ENCODE measurements at regions of chr17 and their contacts with region 1.

Region 1: DNA sequence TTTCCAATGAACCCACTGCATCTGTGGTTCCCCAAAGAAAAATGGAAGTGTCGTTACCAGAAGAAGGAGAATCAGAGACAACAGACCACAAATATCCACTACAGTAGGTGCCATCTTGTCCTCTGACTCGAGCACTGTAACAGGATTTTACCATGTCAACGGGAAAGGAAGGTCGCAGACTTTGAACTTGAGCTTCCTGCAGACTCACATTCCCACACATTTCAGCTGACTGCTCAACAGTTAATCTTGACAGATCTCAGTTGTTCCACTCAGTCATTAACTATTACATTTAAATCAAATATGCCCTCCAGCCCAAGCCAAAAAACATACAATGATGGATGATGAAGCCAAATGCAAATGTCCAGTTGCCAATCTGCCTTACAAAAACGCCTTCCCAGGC is 37.0 kb downstream of the GAS7 start:
- DNase-seq: no peak

Region 2: GRCh38 chr17:10144982-10145381 is 16.4 kb before region 1 on chr17:
- intact Hi-C with region 1: loop called in 1 of 2 experiments (anchors 2 kb)
- DNase-seq: no peak

Region 3: DNA sequence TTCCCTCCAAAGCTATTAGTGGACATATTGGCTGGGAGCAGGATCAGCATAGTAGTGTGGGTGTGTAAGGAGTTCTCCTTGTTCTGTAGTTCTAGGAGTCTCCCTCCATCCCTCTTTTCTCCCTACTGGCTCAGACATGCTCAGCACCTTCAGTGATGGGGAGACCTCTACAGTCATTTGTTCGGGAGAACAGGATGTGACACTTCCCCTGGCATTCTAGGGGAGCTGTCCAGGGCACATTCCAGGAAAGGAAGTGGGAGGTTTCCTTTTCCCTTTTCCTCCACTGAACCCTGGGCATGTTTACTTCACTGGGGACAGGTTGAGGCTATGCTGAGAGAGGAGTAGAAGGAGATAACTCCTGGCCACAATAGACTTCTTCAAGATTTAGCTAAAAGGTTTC is 124.9 kb after region 1 on chr17:
- intact Hi-C with region 1: no loop called
- DNase-seq: no peak